Activated T-helper 1 cell treated with anti-CD3 and anti-CD28 coated beads, Interleukin-12 subunit alpha, Interleukin-12 subunit beta, Interleukin-2, Interleukin-4 antibody, amounts not matched to agents 30 ng/mL and 10 ng/mL and 1 ng/mL, durations not matched to agents 14 hours and 24 hours and 36 hours (primary cell): ENCODE measurements at regions of chr10 and their contacts with region 1.

Region 1: GRCh38 chr10:124802313-124802675 is 675 bp downstream of the ABRAXAS2 start:
- DNase-seq: no peak
- H3K4me3 Mint-ChIP-seq: peak overlapping the region; percentile 95
- H3K27ac Mint-ChIP-seq: peak overlapping the region; percentile 89
- H3K4me1 Mint-ChIP-seq: peaks cover 19% of the 10 kb centered on the region
- H3K27me3 Mint-ChIP-seq: peaks cover 6% of the 10 kb centered on the region

Region 2: GRCh38 chr10:124530215-124530665 is 272.1 kb before region 1 on chr10:
- intact Hi-C with region 1: loop called (anchors 1 kb)
- DNase-seq: peak; percentile 78
- H3K4me3 Mint-ChIP-seq: no peak overlapping the region
- H3K27ac Mint-ChIP-seq: no peak overlapping the region
- H3K4me1 Mint-ChIP-seq: peaks cover 5% of the 10 kb centered on the region
- H3K27me3 Mint-ChIP-seq: peaks cover 10% of the 10 kb centered on the region

Region 3: DNA sequence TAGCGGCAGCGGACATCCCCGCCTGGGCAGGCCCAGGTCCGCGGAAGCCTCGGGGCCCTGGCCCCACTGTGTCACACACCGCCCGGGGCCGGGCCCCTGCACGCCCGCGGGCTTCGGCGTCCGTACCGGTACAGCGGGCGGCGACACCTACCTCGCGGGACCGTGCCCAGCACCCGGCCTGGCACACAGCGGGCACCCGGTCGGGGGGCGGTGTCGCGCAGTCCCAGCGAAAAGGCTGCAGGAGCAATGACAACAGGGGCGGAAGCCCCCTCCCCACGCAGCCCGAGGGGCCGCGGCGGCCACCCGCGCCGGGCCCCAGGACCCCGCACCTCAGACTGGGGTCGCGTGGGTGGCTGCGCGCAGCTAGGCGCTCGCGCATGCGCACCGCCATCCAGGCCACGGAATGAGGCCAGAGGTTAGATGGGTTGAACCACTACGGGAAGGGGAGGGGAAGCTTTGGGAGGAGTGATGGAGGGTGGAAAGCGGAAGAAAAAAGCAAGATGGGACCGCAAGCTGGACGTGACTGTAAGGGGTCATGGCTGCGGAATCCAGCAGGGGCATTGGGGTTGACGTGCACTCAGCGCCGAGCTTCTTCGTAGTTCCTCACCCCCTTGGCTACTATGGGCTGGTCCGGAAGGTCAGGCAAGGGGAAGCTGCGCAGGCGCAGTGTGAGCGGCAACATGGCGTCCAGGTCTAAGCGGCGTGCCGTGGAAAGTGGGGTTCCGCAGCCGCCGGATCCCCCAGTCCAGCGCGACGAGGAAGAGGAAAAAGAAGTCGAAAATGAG is 1020.8 kb after region 1 on chr10 and contains the starts of genes BCCIP and UROS:
- intact Hi-C with region 1: loop called (anchors 5 kb)
- DNase-seq: peak; percentile 86
- H3K4me3 Mint-ChIP-seq: peak within 1 kb of the TSS; percentile 87
- H3K27ac Mint-ChIP-seq: peak within 1 kb of the TSS; percentile 41
- H3K4me1 Mint-ChIP-seq: peaks cover 11% of the 10 kb centered on the region
- H3K27me3 Mint-ChIP-seq: no peaks in the 10 kb centered on the region
- total RNA-seq, gene BCCIP: 127 and 128 TPM in 2 replicates
- total RNA-seq, gene UROS: 49.0 and 57.8 TPM in 2 replicates